B cell (primary cell): ENCODE measurements at regions of chr1 and their contacts with region 1.

Region 1: GRCh38 chr1:204975570-204976235 is 67.3 kb upstream of the CNTN2 start:
- DNase-seq: peak; percentile 75
- ATAC-seq: peak; percentile 90
- H3K4me3 ChIP-seq: no peak overlapping the region
- H3K4me3 Mint-ChIP-seq: no peak overlapping the region
- H3K27ac ChIP-seq: no peak overlapping the region
- H3K27ac Mint-ChIP-seq: no peak overlapping the region
- H3K4me1 ChIP-seq: peaks cover 18 to 25% of the 10 kb centered on the region in 2 donors
- H3K4me1 Mint-ChIP-seq: peaks cover 14% of the 10 kb centered on the region
- H3K27me3 ChIP-seq: peaks cover 0 to 16% (median 7%) of the 10 kb centered on the region in 4 experiments
- H3K27me3 Mint-ChIP-seq: peaks cover 18% of the 10 kb centered on the region
- CTCF ChIP-seq: peak; percentile 91

Region 2: GRCh38 chr1:204961765-204962419 is 13.8 kb before region 1 on chr1:
- CTCF ChIA-PET with region 1: interaction called, 18 read pairs
- POLR2A ChIA-PET with region 1: no interaction called
- intact Hi-C with region 1: no loop called
- DNase-seq: no peak
- ATAC-seq: no peak
- H3K4me3 ChIP-seq: no peak overlapping the region
- H3K4me3 Mint-ChIP-seq: no peak overlapping the region
- H3K27ac ChIP-seq: no peak overlapping the region
- H3K27ac Mint-ChIP-seq: no peak overlapping the region
- H3K4me1 ChIP-seq: peaks cover 19 to 25% of the 10 kb centered on the region in 2 donors
- H3K4me1 Mint-ChIP-seq: peaks cover 27% of the 10 kb centered on the region
- H3K27me3 ChIP-seq: peaks cover 0 to 16% (median 5%) of the 10 kb centered on the region in 4 experiments
- H3K27me3 Mint-ChIP-seq: peaks cover 40% of the 10 kb centered on the region
- CTCF ChIP-seq: no peak